ENCODE measurements at regions of chr18 and their contacts with region 1.

Region 1: GRCh38 chr18:59988098-59988706 is 88.4 kb downstream of the PMAIP1 start:
- DNase-seq: peak; percentile 60
- H3K4me3 Mint-ChIP-seq: no peak overlapping the region
- H3K27ac Mint-ChIP-seq: no peak overlapping the region
- H3K4me1 Mint-ChIP-seq: peaks cover 30% of the 10 kb centered on the region
- H3K27me3 Mint-ChIP-seq: no peaks in the 10 kb centered on the region
- CTCF ChIP-seq: peak; percentile 72

Region 2: GRCh38 chr18:59671551-59671950 is 316.7 kb before region 1 on chr18:
- CTCF ChIA-PET with region 1: no interaction called
- intact Hi-C with region 1: no loop called
- DNase-seq: no peak
- H3K4me3 Mint-ChIP-seq: no peak overlapping the region
- H3K27ac Mint-ChIP-seq: no peak overlapping the region
- H3K4me1 Mint-ChIP-seq: no peaks in the 10 kb centered on the region
- H3K27me3 Mint-ChIP-seq: peaks cover 14% of the 10 kb centered on the region
- CTCF ChIP-seq: no peak

Region 3: DNA sequence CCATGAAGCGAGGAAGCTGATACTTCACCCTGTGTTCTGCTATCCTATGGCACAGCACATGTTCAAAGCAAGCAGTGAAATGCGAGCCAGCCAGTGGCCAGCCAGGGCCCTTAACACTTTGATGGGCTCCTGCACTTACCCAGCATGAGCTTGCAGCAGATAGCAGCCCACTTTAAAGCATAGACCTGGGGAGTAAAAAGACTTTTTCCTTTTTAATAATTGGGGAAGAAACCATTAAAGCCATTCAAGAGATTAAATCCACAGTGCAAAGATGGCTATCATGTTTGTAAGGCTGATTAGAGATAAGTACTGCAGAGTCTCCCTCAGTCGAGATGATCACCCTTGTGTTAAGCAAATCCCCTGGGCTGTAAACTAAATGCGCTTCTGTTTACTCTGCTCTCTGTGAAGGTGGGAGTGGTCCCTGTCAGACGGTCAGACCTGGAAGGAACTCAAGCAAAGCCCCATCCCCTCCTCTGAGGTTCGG is 306.6 kb before region 1 on chr18:
- CTCF ChIA-PET with region 1: no interaction called
- intact Hi-C with region 1: no loop called
- DNase-seq: no peak
- H3K4me3 Mint-ChIP-seq: no peak overlapping the region
- H3K27ac Mint-ChIP-seq: no peak overlapping the region
- H3K4me1 Mint-ChIP-seq: no peaks in the 10 kb centered on the region
- H3K27me3 Mint-ChIP-seq: peaks cover 28% of the 10 kb centered on the region
- CTCF ChIP-seq: no peak

Region 4: DNA sequence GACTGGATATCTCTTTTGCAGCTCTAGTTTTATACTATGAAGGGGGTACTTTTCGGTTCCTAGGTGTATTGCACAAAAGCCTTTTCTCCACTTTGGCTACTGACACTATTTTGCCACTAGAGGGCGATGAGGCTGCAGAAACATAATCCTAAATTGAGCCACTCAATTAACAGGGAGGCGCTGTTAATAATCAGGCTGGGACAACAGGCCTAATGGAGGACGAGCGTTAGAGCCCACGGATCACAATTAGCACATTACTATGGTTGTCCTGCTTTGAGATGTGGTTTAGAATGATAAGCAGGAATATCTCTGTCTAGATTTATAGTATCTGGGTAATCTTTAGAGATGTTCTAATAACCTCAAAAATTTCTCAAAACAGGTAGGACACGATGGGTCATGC is 150.6 kb before region 1 on chr18:
- CTCF ChIA-PET with region 1: no interaction called
- intact Hi-C with region 1: loop called (anchors 5 kb)
- DNase-seq: peak; percentile 67
- H3K4me3 Mint-ChIP-seq: no peak overlapping the region
- H3K27ac Mint-ChIP-seq: no peak overlapping the region
- H3K4me1 Mint-ChIP-seq: peaks cover 26% of the 10 kb centered on the region
- H3K27me3 Mint-ChIP-seq: no peaks in the 10 kb centered on the region
- CTCF ChIP-seq: peak; percentile 86

Region 5: DNA sequence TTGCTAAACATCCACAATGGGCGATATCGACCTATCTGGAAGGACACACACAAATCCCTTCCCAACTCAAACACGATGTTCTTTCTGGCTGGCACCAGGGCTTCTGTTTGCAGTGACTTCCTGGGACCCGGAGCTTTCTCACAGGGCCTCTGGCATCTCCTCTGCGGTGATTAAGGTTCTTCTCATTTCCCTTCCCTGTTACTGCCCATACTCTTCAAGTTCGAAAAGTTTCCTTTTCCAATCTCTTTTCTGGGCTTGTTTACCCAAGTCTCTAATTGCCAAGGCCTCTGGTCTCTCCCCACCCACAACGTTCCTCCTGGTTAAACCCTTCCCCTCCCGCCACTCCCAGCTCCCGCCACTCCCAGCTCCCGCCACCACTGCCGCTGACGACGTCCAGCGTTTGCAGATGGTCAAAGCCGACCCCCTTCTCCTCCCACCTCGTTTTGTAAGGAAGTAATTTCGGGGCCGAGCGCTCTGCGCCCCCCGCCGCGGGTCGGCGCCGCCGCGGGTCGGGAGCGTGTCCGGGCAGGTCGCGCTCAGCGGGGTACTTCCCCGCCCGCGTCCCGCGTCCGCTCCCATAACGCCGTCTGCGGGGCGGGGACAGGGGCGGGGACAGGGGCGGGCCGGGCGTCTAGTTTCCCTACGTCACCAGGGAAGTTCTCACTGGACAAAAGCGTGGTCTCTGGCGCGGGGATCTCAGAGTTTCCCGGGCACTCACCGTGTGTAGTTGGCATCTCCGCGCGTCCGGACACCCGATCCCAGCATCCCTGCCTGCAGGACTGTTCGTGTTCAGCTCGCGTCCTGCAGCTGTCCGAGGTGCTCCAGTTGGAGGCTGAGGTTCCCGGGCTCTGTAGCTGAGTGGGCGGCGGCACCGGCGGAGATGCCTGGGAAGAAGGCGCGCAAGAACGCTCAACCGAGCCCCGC is 88.6 kb before region 1 on chr18 and contains the start of gene PMAIP1:
- CTCF ChIA-PET with region 1: interaction called, 5 read pairs
- intact Hi-C with region 1: loop called (anchors 5 kb)
- DNase-seq: peak; percentile 92
- H3K4me3 Mint-ChIP-seq: peak within 1 kb of the TSS; percentile 92
- H3K27ac Mint-ChIP-seq: peak within 1 kb of the TSS; percentile 98
- H3K4me1 Mint-ChIP-seq: peaks cover 24% of the 10 kb centered on the region
- H3K27me3 Mint-ChIP-seq: no peaks in the 10 kb centered on the region
- CTCF ChIP-seq: no peak
- total RNA-seq, gene PMAIP1: 56.1 and 75.4 TPM in 2 replicates

Region 6: GRCh38 chr18:59941331-59941730 is 46.9 kb before region 1 on chr18:
- CTCF ChIA-PET with region 1: no interaction called
- intact Hi-C with region 1: no loop called
- DNase-seq: no peak
- H3K4me3 Mint-ChIP-seq: no peak overlapping the region
- H3K27ac Mint-ChIP-seq: no peak overlapping the region
- H3K4me1 Mint-ChIP-seq: no peaks in the 10 kb centered on the region
- H3K27me3 Mint-ChIP-seq: no peaks in the 10 kb centered on the region
- CTCF ChIP-seq: no peak

Region 7: DNA sequence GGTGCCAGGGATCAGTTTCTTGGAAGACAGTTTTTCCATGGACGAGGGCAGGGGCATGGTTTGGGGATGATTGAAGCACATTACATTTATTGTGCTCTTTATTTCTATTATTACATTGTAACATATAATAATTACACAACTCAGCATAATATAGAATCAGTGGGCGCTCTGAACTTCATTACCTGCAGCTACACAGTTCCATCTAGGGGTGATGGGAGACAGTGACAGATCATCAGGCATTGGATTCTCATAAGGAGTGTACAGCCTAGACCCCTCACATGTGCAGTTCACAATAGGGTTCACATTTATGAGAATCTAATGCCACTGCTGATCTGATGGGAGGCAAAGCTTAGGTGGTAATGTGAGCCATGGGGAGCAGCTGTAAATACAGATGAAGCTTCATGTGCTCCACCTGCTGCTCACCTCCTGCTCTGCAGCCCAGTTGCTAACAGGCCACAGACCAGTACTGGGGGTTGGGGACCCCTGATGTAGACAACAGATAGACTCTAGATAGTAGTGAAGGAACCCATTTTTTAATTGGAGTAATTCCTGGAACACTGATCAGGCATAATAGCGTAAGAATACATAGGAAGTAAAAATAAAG is 425.8 kb after region 1 on chr18:
- CTCF ChIA-PET with region 1: interaction called, 5 read pairs
- intact Hi-C with region 1: loop called (anchors 2 kb)
- DNase-seq: peak; percentile 52
- H3K4me3 Mint-ChIP-seq: no peak overlapping the region
- H3K27ac Mint-ChIP-seq: no peak overlapping the region
- H3K4me1 Mint-ChIP-seq: no peaks in the 10 kb centered on the region
- H3K27me3 Mint-ChIP-seq: no peaks in the 10 kb centered on the region
- CTCF ChIP-seq: peak; percentile 54

Region 8: DNA sequence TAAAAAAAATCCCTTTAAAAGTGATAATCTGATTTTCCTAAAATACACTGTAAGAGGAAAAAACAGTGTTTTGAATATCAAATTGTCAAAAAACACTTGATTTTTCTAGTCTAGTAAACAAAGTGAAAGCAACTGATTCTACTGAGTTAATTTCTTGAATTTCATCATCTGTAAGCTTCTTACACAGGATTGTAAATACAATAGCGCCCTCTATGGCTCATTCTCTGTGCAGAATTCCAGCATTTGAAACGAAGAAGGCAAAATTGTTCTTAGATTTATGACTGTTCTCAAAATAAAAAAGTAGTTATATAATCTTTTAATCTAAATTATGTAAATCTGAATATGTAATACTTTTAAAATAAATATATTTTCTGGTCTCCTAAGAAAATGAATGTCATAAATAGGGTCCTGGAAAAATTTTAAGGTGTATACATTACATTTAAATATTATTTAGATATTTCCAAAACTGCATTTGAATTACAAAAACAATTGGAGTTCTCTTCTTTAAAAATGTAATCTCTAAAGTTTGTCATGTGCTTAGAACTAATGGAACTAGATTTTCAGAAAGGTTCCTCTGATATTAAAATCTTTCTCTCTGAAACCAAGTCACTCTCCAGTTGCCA is 561.2 kb after region 1 on chr18:
- CTCF ChIA-PET with region 1: interaction called, 3 read pairs
- intact Hi-C with region 1: loop called (anchors 2 kb)
- DNase-seq: peak; percentile 30
- H3K4me3 Mint-ChIP-seq: no peak overlapping the region
- H3K27ac Mint-ChIP-seq: peak overlapping the region; percentile 28
- H3K4me1 Mint-ChIP-seq: no peaks in the 10 kb centered on the region
- H3K27me3 Mint-ChIP-seq: no peaks in the 10 kb centered on the region
- CTCF ChIP-seq: peak; percentile 68

Region 9: GRCh38 chr18:60676815-60677214 is 688.6 kb after region 1 on chr18:
- CTCF ChIA-PET with region 1: no interaction called
- intact Hi-C with region 1: loop called (anchors 5 kb)
- DNase-seq: no peak
- H3K4me3 Mint-ChIP-seq: no peak overlapping the region
- H3K27ac Mint-ChIP-seq: no peak overlapping the region
- H3K4me1 Mint-ChIP-seq: no peaks in the 10 kb centered on the region
- H3K27me3 Mint-ChIP-seq: no peaks in the 10 kb centered on the region
- CTCF ChIP-seq: no peak

Region 10: DNA sequence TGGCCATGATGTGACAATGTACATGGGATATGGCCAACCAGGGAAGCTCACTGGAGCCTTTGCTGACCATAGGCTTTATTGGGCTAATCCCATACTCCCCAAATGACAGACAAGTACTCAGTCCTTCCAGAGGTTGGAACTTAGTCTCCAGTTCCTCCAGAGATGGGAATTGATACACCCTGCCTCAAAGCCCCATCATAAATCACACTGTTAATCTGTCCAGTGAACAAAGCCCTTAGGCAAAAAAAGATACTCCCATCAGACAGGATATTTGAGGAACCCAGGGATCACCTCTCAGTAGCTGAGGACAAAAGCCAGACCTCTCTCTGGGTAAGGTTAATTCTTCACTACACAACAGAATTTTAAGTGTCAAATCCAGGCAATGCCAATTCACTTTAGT is 1097.6 kb after region 1 on chr18:
- CTCF ChIA-PET with region 1: no interaction called
- intact Hi-C with region 1: loop called (anchors 5 kb)
- DNase-seq: no peak
- H3K4me3 Mint-ChIP-seq: no peak overlapping the region
- H3K27ac Mint-ChIP-seq: no peak overlapping the region
- H3K4me1 Mint-ChIP-seq: no peaks in the 10 kb centered on the region
- H3K27me3 Mint-ChIP-seq: no peaks in the 10 kb centered on the region
- CTCF ChIP-seq: no peak

Measured in Calu3 (cell line).